AG04449 (cell line): ENCODE measurements at regions of chr13 and their contacts with region 1.

Region 1: DNA sequence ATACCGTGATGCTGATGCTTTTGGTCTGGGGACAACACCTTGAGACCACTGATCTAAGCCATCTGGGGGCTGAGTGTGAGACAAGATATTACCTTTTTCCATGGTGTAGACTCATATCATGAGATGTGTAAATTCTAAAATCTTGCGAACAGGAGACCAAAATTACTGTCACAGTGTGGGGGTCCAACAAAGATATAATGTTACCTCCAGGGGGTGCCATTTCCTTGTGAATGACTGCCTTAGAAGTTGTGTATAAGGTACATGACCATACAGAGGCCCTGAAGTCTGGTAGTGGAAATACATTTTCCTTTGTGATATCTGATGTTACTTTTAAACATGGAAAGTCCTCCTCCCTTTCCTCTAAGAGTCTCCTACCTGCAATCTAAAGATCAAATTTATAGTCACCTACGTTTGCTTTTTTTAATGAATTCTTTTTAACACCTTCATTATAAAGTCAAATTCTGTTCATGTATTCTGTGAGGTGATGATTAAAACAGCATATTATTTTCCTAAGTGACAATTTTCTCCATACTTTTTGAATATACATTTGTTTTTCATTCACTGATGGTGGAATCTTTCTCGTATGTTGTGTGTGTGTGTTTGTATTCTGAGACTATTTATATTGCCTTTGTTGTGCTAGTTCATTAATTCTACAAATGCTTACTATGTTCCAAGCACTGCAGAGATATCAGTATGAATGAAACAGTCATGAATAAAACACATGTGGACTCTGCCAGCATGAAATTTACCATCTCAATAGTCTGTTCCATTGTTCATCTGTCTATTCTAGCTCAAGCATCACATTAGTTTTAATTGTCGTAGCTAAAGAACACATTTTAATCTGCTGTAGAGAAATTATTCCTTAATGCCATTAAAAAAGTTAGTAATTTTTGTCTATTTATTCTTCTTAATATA is 113.7 kb downstream of the RFC3 start:
- DNase-seq: no peak
- H3K4me3 ChIP-seq: no peak overlapping the region
- CTCF ChIP-seq: peak; percentile 40

Region 2: DNA sequence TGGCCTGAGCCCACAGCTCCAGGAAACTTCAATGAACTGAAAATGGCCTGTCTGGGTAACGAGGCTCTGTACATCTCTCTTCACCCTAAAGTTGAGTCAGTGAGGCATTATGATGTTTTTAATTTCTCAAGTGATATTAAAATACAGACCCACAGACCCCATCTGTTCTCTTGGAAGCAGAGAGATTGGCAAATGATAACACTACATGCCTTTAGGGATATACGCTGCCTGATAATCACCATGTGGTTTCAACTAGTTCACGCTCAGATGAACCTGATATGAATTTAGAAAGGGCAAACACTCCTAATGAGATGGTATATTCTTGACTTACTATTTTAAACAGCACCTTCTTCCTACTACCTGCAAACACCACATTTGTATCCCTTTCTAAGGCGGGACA is 13.8 kb after region 1 on chr13:
- CTCF ChIA-PET with region 1: no interaction called
- POLR2A ChIA-PET with region 1: no interaction called
- DNase-seq: no peak
- H3K4me3 ChIP-seq: no peak overlapping the region
- CTCF ChIP-seq: no peak

Region 3: GRCh38 chr13:34019870-34020269 is 88.2 kb after region 1 on chr13:
- CTCF ChIA-PET with region 1: no interaction called
- POLR2A ChIA-PET with region 1: no interaction called
- DNase-seq: no peak
- H3K4me3 ChIP-seq: no peak overlapping the region
- CTCF ChIP-seq: no peak

Region 4: DNA sequence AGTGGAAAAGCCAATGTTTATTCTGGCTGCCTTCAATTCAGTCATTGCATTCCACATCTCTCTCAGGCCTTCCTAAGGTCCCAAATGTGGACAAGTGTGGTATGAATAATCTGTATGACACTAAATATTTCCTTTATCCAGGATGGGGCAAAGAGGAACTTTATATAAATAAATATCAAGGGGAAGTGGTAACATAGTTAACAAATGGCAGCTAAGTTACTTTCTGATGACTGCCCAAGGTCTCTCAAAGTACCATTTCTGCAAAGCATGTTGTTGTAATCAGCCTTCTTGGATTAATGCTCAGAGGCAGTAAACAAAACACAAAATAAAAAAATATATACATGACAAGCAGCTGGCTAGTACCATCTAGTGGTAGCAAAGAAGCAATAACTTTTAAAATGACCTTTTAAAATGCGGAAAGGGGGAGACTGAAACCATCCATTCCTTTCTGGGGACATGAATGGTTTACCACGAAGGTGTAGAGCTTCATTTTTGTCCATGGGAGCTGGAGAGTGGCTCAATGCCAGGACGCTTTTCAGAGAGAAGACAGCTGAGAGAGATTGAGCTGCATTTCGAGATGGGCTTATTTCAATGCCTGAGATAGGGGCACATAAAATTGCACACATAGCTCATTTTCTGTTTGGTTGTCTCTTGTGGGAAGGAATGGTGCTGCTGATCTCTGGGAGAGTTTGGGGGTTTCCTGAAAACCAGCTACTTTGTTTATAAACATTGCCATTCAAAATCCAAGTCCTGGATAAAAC is 145.5 kb after region 1 on chr13:
- CTCF ChIA-PET with region 1: interaction called, 75 read pairs
- POLR2A ChIA-PET with region 1: no interaction called
- DNase-seq: peak; percentile 12
- H3K4me3 ChIP-seq: no peak overlapping the region
- CTCF ChIP-seq: no peak

Region 5: GRCh38 chr13:35157143-35157755 is 1225.6 kb after region 1 on chr13:
- CTCF ChIA-PET with region 1: interaction called, 17 read pairs
- POLR2A ChIA-PET with region 1: no interaction called
- DNase-seq: no peak
- H3K4me3 ChIP-seq: no peak overlapping the region
- CTCF ChIP-seq: peak; percentile 51

Region 6: DNA sequence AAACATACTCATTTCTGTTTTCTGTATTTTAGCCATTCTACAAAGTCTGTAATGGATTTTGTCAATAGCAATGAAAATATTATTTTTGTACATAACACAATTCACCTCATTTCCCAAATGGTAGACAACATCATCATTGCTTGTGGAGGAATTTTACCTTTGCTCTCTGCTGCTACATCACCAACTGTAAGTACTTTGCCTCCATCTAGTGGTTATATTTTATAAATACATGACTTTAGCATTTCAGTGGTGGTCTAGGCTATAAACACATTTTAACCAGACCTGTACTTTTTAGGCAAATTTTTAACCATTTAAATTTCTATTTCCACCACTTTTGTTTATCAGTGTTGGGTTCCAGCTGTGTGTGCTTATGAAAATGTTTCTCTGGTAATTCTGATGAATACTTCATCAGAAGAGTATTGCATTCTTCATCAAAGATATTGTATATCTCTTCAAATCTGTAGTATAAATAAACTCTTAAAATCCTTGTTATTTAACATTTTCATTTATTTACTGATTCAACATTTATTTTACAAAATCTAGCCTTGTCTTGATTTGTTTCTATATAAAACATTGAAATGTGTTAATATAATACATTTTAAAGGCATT is 1232.8 kb after region 1 on chr13:
- CTCF ChIA-PET with region 1: interaction called, 13 read pairs
- POLR2A ChIA-PET with region 1: no interaction called
- DNase-seq: no peak
- H3K4me3 ChIP-seq: no peak overlapping the region
- CTCF ChIP-seq: peak; percentile 49